ENCODE measurements at regions of chr12 and their contacts with region 1.

Region 1: GRCh38 chr12:52082988-52083637 is 3.6 kb downstream of the SMIM41 start:
- DNase-seq: peak; percentile 36 to 58 (median 48)
- ATAC-seq: peak; percentile 62
- H3K4me3 ChIP-seq: no peak overlapping the region
- H3K27ac ChIP-seq: peak overlapping the region in 1 of 4 donors; percentile 46
- H3K4me1 ChIP-seq: no peaks in the 10 kb centered on the region
- H3K27me3 ChIP-seq: no peaks in the 10 kb centered on the region
- CTCF ChIP-seq: peak; percentile 79 to 94 (median 89)
- POLR2A ChIP-seq: no peak

Region 2: DNA sequence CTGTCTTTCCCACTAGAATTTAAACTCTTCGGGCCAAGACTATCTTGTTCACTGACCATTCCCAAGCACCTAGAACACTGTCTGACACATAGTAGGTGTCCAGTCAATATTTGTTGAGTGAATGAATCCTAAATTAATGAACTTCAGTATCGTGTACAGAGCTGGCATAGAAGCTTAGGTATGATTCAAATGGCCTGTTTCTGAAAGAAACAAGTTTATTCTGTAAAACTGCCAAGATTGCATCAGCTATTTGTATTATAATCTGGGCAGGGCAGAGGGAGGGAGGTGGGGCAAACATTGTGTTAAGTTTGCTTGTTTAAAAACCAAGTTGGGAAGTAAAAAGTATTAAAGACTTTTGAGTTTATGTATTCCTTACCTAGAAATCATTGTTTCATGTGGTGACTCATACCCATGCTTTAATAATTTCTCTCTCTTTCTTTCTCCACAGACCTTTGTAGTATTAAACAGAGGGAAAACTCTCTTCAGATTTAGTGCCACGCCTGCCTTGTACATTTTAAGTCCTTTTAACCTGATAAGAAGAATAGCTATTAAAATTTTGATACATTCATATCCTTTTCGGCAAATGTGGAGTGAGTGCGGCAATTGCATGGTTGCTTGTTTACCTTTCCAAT is 399.3 kb before region 1 on chr12:
- intact Hi-C with region 1: no loop called
- DNase-seq: peak; percentile 31 to 62 (median 61)
- ATAC-seq: peak; percentile 92
- H3K4me3 ChIP-seq: no peak overlapping the region
- H3K27ac ChIP-seq: peak overlapping the region; percentile 55 to 71 (median 64)
- H3K4me1 ChIP-seq: peaks cover 20% of the 10 kb centered on the region
- H3K27me3 ChIP-seq: no peaks in the 10 kb centered on the region
- CTCF ChIP-seq: no peak
- POLR2A ChIP-seq: no peak

Region 3: DNA sequence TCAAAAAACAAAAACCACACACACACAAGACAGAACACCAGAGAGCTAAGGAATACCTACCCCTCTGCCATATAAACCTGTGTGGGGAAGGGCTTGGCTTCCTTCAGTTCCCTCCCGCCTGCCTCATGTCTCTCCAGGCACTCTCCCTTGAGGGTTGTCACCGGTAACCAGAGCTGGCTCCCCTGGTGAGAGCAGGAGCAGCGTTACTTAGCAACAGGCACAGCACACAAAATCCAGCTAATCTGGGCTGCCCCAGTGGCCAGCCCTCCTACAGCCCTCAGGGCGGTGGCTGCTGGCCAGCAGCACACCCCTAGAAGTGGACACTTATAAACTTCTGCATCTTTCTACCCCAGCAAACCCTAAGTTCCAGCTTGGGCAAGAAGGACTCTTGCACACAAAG is 53.4 kb before region 1 on chr12:
- intact Hi-C with region 1: loop called (anchors 5 kb)
- DNase-seq: peak in 3 of 4 donors; percentile 58 to 65 (median 58)
- ATAC-seq: no peak
- H3K4me3 ChIP-seq: no peak overlapping the region
- H3K27ac ChIP-seq: no peak overlapping the region
- H3K4me1 ChIP-seq: peaks cover 33% of the 10 kb centered on the region
- H3K27me3 ChIP-seq: no peaks in the 10 kb centered on the region
- CTCF ChIP-seq: no peak
- POLR2A ChIP-seq: no peak

Region 4: GRCh38 chr12:52121824-52122539 is 38.9 kb after region 1 on chr12:
- intact Hi-C with region 1: loop called (anchors 5 kb)
- DNase-seq: peak; percentile 65 to 76 (median 72)
- ATAC-seq: peak; percentile 41
- H3K4me3 ChIP-seq: no peak overlapping the region
- H3K27ac ChIP-seq: no peak overlapping the region
- H3K4me1 ChIP-seq: peaks cover 24% of the 10 kb centered on the region
- H3K27me3 ChIP-seq: no peaks in the 10 kb centered on the region
- CTCF ChIP-seq: peak; percentile 53 to 85 (median 63)
- POLR2A ChIP-seq: no peak

Measured in body of pancreas (tissue), 4 donors.